ENCODE measurements at regions of chr1 and their contacts with region 1.

Region 1: DNA sequence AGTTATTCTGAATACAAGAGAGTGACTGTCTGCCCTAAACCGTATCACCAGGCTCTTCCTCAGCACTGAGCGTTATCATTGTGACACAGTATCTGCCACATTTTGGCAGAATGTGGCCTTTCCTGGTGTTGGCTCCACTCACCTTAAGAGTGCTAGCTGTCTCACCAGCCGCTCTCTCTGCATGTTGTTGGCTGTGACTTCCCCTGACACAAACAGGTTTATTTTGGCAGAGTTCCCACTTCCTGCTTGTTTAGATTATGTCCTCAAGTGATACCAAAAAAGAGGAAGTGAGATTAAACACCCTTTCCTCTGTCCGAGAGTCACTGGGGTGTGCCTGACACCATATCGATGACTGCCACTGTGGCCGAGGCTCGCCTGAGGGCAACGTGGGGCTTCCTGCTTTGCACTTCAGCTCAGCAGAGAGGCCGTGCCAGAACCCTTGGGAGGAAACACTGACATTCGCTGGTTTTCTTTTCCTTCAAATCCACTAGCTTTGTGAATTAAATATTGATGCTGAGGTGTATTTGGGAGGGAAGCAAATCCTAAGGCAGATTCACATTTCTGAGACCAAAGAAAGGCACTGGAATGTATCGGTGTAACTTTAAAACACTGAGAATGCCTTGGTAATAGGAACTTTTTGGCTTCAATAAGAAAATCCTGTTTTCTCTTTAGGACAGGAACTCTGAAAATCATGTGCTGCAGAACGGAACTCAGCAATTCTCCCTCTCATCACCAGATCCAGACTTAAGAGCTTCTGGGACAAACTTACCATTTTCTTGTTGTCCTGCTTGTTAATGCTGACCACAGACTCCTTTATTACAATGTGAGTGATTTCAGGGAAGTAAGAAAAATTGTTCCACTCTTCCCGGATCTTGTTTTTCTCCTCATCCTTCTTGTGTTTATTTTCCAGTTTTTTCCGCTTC is 102.1 kb downstream of the JAK1 start:
- DNase-seq: peak; percentile 11 to 92 (median 57)
- ATAC-seq: peak; percentile 82
- H3K4me3 ChIP-seq: no peak overlapping the region
- H3K4me3 Mint-ChIP-seq: peak overlapping the region; percentile 37
- H3K27ac ChIP-seq: peak overlapping the region in 1 of 2 experiments; percentile 83
- H3K27ac Mint-ChIP-seq: peak overlapping the region; percentile 79
- H3K4me1 ChIP-seq: peaks cover 19% of the 10 kb centered on the region
- H3K4me1 Mint-ChIP-seq: peaks cover 44% of the 10 kb centered on the region
- H3K27me3 ChIP-seq: no peaks in the 10 kb centered on the region
- H3K27me3 Mint-ChIP-seq: no peaks in the 10 kb centered on the region
- CTCF ChIP-seq: no peak

Region 2: GRCh38 chr1:64574301-64574700 is 290.0 kb before region 1 on chr1:
- CTCF ChIA-PET with region 1: no interaction called
- POLR2A ChIA-PET with region 1: no interaction called
- intact Hi-C with region 1: no loop called
- DNase-seq: no peak
- ATAC-seq: no peak
- H3K4me3 ChIP-seq: no peak overlapping the region
- H3K4me3 Mint-ChIP-seq: no peak overlapping the region
- H3K27ac ChIP-seq: no peak overlapping the region
- H3K27ac Mint-ChIP-seq: no peak overlapping the region
- H3K4me1 ChIP-seq: no peaks in the 10 kb centered on the region
- H3K4me1 Mint-ChIP-seq: no peaks in the 10 kb centered on the region
- H3K27me3 ChIP-seq: no peaks in the 10 kb centered on the region
- H3K27me3 Mint-ChIP-seq: peaks cover 4% of the 10 kb centered on the region
- CTCF ChIP-seq: no peak

Region 3: GRCh38 chr1:65002508-65003315 is 138.4 kb after region 1 on chr1:
- CTCF ChIA-PET with region 1: no interaction called
- POLR2A ChIA-PET with region 1: interaction called, 3 read pairs
- intact Hi-C with region 1: loop called in 1 of 2 experiments (anchors 2 kb)
- DNase-seq: peak; percentile 42 to 91 (median 79)
- ATAC-seq: peak; percentile 87
- H3K4me3 ChIP-seq: peak overlapping the region; percentile 56 to 66
- H3K4me3 Mint-ChIP-seq: peak overlapping the region; percentile 84
- H3K27ac ChIP-seq: peak overlapping the region; percentile 10 to 61
- H3K27ac Mint-ChIP-seq: peak overlapping the region; percentile 91
- H3K4me1 ChIP-seq: peaks cover 19% of the 10 kb centered on the region
- H3K4me1 Mint-ChIP-seq: peaks cover 30% of the 10 kb centered on the region
- H3K27me3 ChIP-seq: peaks cover 0 to 2% of the 10 kb centered on the region in 2 experiments
- H3K27me3 Mint-ChIP-seq: no peaks in the 10 kb centered on the region
- CTCF ChIP-seq: no peak

Region 4: DNA sequence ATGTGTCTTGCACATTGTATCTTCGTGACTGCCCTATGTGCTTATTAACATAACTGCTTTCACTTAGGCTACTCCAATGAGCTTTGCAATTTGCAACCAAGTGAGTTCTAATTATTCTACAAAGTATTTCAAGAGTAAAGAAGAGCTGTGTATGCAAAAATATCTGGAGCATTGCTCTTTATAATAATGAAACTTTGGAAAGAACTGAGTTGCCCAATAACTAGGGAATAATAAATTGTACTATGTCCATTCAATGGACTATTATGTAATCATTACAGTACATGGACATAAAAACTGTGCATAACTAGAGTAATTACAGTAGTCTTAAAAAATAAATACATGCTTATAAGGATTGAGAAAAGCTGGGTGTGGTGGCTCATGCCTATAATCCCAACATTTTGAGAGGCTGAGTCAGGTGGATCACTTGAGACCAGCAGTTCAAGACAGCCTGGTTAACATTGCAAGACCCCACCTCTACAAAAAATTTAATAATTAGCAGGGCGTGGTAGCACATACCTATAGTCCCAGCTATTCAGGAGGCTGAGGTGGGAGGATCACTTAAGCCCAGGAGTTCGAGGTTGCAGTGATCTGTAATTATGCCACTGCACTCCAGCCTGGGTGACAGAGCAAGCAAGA is 172.4 kb after region 1 on chr1:
- CTCF ChIA-PET with region 1: no interaction called
- POLR2A ChIA-PET with region 1: no interaction called
- intact Hi-C with region 1: no loop called
- DNase-seq: no peak
- ATAC-seq: no peak
- H3K4me3 ChIP-seq: no peak overlapping the region
- H3K4me3 Mint-ChIP-seq: no peak overlapping the region
- H3K27ac ChIP-seq: no peak overlapping the region
- H3K27ac Mint-ChIP-seq: no peak overlapping the region
- H3K4me1 ChIP-seq: peaks cover 7% of the 10 kb centered on the region
- H3K4me1 Mint-ChIP-seq: peaks cover 13% of the 10 kb centered on the region
- H3K27me3 ChIP-seq: no peaks in the 10 kb centered on the region
- H3K27me3 Mint-ChIP-seq: no peaks in the 10 kb centered on the region
- CTCF ChIP-seq: no peak

Measured in CD8-positive, alpha-beta T cell (primary cell).